ENCODE measurements at regions of chr11 and their contacts with region 1.

Region 1: GRCh38 chr11:42770444-42771065 is 541.2 kb upstream of the API5 start:
- DNase-seq: peak in 6 of 7 donors; percentile 24 to 64 (median 46)
- H3K4me3 ChIP-seq: no peak overlapping the region
- H3K27ac ChIP-seq: no peak overlapping the region
- H3K4me1 ChIP-seq: no peaks in the 10 kb centered on the region
- H3K27me3 ChIP-seq: no peaks in the 10 kb centered on the region
- CTCF ChIP-seq: peak; percentile 63 to 71 (median 68)
- POLR2A ChIP-seq: no peak

Region 2: DNA sequence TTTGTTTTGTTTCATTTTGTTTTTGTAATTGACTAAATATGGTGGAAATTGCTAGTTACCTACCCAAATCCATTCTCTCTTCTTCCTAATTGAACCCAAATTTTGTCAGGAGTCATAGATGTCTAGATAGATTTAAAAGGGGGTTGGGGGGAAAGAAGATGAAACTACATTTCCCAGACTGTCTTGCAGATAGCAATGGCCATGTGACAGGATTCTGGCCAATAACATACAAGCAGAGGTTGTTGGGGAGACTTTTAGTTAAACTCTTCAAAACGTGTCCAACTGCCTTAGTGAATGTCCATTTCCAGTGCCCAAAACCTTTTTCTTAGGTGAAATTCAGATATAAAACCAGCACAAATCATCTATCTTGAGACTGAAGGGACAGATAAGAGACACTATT is 42.7 kb before region 1 on chr11:
- intact Hi-C with region 1: no loop called
- DNase-seq: no peak
- H3K4me3 ChIP-seq: no peak overlapping the region
- H3K27ac ChIP-seq: no peak overlapping the region
- H3K4me1 ChIP-seq: no peaks in the 10 kb centered on the region
- H3K27me3 ChIP-seq: no peaks in the 10 kb centered on the region
- CTCF ChIP-seq: no peak
- POLR2A ChIP-seq: no peak

Region 3: GRCh38 chr11:43129329-43129728 is 358.8 kb after region 1 on chr11:
- intact Hi-C with region 1: loop called in 1 of 2 experiments (anchors 5 kb)
- DNase-seq: no peak
- H3K4me3 ChIP-seq: no peak overlapping the region
- H3K27ac ChIP-seq: no peak overlapping the region
- H3K4me1 ChIP-seq: no peaks in the 10 kb centered on the region
- H3K27me3 ChIP-seq: no peaks in the 10 kb centered on the region
- CTCF ChIP-seq: no peak
- POLR2A ChIP-seq: no peak

Region 4: GRCh38 chr11:43282607-43283440 is 512.3 kb after region 1 on chr11:
- intact Hi-C with region 1: loop called (anchors 5 to 10 kb)
- DNase-seq: peak; percentile 28 to 75 (median 40)
- H3K4me3 ChIP-seq: no peak overlapping the region
- H3K27ac ChIP-seq: no peak overlapping the region
- H3K4me1 ChIP-seq: no peaks in the 10 kb centered on the region
- H3K27me3 ChIP-seq: no peaks in the 10 kb centered on the region
- CTCF ChIP-seq: peak; percentile 64 to 93 (median 77)
- POLR2A ChIP-seq: no peak

Measured in adrenal gland (tissue), 19 donors.